ENCODE measurements at regions of chr12 and their contacts with region 1.

Region 1: DNA sequence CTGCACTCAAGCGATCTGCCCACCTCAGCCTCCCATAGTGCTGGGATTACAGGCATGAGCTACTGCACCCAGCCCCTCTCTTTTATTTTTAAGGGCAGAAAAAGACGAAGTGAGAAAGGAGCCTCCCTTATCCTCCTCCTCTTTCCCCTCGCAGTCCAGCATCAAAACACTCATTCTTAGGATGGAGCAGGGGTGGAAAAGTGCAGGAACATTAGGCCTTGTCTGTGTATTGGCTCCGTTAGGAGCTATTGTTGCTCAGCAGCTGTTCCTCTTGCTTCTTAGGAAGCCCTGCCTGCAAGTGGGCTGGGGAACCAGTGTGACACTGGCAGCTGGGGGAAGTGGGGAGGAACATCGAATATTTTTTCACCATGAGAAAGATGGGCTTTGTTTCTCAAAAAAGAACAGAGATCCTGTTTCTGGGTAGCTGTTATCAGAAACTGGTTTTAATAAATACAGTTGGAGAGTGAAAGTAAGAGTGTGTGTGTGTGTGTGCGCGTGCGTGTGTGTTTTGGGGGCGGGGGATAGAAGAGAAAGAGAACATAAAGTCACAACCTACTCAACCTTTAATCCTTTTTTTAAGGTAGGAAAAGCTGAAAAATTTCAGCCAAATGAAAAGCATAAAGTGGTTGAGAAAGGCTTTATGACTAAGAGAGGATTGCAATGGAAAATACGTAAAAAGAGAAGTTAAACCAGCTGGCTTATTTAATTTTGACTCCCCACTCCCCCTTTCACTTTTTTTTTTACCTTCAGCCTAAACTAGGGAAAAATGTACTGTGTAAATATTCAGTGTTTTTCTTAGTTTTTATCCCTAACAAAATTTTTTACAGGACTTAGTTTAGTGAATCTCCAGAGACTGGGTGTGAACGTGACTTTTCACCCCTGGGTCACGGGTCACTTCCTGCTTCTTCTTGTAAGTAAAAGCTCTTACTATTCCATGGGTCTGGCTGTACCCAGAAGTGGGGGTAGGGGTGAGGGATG is 197.2 kb upstream of the PLEKHG7 start:
- DNase-seq: peak; percentile 52
- H3K4me3 Mint-ChIP-seq: peak overlapping the region; percentile 74
- H3K27ac Mint-ChIP-seq: peak overlapping the region; percentile 99
- H3K4me1 Mint-ChIP-seq: peaks cover 48% of the 10 kb centered on the region
- H3K27me3 Mint-ChIP-seq: no peaks in the 10 kb centered on the region

Region 2: GRCh38 chr12:92469837-92470236 is 35.7 kb before region 1 on chr12:
- CTCF ChIA-PET with region 1: no interaction called
- POLR2A ChIA-PET with region 1: no interaction called
- DNase-seq: no peak
- H3K4me3 Mint-ChIP-seq: no peak overlapping the region
- H3K27ac Mint-ChIP-seq: no peak overlapping the region
- H3K4me1 Mint-ChIP-seq: peaks cover 12% of the 10 kb centered on the region
- H3K27me3 Mint-ChIP-seq: no peaks in the 10 kb centered on the region

Region 3: DNA sequence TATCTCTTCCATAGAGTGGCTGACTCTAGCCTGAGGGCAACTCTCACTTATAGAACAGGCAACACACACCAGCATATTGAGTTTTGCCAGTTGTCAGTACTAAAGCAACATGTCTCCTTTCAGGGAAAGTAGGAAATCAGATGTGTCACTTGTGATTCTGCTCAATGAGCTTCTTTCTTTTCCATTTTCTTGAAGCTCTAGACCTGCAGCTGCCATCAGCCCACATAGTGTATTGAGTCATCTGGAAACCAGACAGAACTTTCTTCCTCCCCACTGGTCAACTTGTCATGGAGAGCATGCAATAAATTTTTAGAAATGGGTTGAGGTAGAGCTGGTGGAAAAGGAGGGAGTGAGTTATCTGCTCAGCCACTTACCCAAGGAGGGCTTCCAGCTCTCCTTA is 11.7 kb before region 1 on chr12:
- CTCF ChIA-PET with region 1: interaction called, 30 read pairs
- POLR2A ChIA-PET with region 1: no interaction called
- DNase-seq: no peak
- H3K4me3 Mint-ChIP-seq: no peak overlapping the region
- H3K27ac Mint-ChIP-seq: no peak overlapping the region
- H3K4me1 Mint-ChIP-seq: peaks cover 4% of the 10 kb centered on the region
- H3K27me3 Mint-ChIP-seq: no peaks in the 10 kb centered on the region

Region 4: DNA sequence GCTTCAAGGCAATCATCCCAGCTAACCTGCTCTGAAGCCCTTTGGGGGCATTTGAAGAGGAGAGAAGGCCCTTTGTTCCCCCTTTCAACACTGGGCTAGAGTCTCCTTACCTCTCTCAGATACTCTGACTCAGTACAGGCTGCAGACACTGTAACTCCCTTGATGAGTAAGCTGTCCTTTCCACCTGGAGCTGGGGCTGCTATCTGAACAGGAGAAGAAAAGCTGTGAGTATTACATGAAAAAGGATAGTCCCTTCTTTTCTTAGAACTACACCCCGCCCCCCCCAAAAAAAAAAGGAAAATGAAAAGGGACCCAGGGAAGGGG is 10.7 kb after region 1 on chr12:
- CTCF ChIA-PET with region 1: interaction called, 34 read pairs
- POLR2A ChIA-PET with region 1: interaction called, 6 read pairs
- DNase-seq: no peak
- H3K4me3 Mint-ChIP-seq: no peak overlapping the region
- H3K27ac Mint-ChIP-seq: no peak overlapping the region
- H3K4me1 Mint-ChIP-seq: peaks cover 15% of the 10 kb centered on the region
- H3K27me3 Mint-ChIP-seq: no peaks in the 10 kb centered on the region

Region 5: GRCh38 chr12:92570056-92570753 is 64.7 kb after region 1 on chr12:
- CTCF ChIA-PET with region 1: interaction called, 15 read pairs
- POLR2A ChIA-PET with region 1: no interaction called
- DNase-seq: peak; percentile 68
- H3K4me3 Mint-ChIP-seq: no peak overlapping the region
- H3K27ac Mint-ChIP-seq: no peak overlapping the region
- H3K4me1 Mint-ChIP-seq: peaks cover 13% of the 10 kb centered on the region
- H3K27me3 Mint-ChIP-seq: no peaks in the 10 kb centered on the region

Measured in activated CD4-positive, alpha-beta T cell treated with anti-CD3 and anti-CD28 coated beads, Interleukin-2, amount 10 ng/mL, durations not matched to agents 7 days and 5 days (primary cell).